Pancreas (tissue), 10 donors: ENCODE measurements at regions of chr22 and their contacts with region 1.

Region 1: DNA sequence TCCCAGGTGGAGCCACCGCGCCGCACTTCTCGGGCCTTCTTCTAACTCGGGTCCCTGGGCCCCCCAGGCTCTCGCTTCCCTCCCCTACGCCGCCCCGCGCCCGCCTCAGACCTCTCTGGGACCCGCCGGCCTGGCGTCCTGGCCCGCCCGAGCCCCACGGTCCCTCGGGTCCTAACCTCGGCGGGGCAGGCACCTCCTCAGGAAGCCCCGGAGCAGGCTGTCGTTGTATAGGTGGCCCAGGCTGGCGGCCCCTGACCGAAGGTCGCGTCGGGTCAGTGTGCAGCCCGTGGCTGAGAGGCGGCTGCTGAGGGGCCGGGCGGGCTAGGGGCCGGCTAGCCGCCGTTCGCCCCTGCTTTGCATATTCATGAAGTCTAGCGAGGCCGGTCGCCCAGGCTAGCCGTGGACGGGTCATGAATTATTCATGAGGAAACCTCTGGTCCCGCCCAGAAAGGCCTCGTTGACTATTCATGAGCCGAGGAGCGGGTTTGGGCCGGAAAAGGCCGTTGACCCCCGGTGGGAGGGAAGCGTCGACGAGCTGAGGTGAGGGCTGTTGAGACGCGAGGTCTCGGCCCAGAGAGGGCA is at the start of gene HORMAD2:
- DNase-seq: peak in 1 of 6 donors; percentile 62
- ATAC-seq: no peak
- H3K4me3 ChIP-seq: peak within 1 kb of the TSS in 1 of 4 donors; percentile 10
- H3K27ac ChIP-seq: no peak within 1 kb of the TSS
- H3K4me1 ChIP-seq: no peaks in the 10 kb centered on the region
- H3K27me3 ChIP-seq: no peaks in the 10 kb centered on the region
- CTCF ChIP-seq: no peak
- total RNA-seq, gene HORMAD2: not detected

Region 2: DNA sequence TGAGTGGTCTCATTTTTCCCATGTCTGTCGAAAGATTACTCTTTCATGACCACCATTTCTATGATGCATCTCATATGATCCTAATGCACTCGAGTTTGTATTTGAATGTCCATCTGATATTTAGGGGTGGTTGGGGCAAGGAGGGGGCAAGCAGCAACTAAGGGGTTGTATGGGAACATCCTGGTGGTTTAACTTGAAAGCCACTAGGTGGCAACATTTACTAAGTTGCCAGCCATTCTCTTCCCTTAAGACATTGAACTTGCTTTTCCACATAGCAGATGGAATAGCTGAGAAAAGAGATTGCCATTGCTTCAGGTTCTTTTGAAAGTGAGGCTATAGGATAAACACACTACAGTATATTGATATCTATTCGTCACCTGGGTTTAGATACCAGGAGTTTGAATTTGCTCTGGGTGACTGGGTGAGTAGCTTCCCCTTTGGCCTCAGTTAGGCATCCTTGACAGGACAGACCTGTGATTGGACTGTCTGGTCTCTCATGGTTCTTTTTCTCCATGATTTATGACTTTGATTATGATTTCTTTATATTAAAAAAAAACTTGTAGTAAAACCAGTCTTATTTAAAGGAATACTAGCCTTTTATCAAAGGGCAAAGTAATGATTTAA is 444.2 kb before region 1 on chr22:
- intact Hi-C with region 1: loop called in 1 of 3 experiments (anchors 10 kb)
- DNase-seq: no peak
- ATAC-seq: peak; percentile 56 to 84 (median 80)
- H3K4me3 ChIP-seq: no peak overlapping the region
- H3K27ac ChIP-seq: no peak overlapping the region
- H3K4me1 ChIP-seq: peaks cover 0 to 1% (median 0%) of the 10 kb centered on the region in 3 donors
- H3K27me3 ChIP-seq: no peaks in the 10 kb centered on the region
- CTCF ChIP-seq: peak in 3 of 4 donors; percentile 18 to 39 (median 36)

Region 3: DNA sequence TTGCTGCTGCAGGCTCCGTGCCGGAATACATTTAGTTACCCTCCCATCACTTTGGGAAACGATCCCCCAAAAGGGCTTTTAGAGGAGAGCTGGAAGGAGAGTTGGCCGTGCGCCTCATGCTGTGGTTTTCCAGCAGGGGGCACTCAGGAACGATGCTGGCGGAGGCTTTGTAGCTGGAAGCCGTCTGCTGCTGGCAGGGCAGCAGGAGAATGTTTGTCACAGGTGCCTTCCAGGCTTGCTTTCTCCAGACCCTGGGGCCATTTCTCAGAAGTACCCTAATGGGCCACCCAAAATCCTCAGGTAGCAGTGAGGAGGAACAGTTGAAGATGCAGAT is 390.2 kb before region 1 on chr22:
- intact Hi-C with region 1: loop called in 1 of 3 experiments (anchors 10 kb)
- DNase-seq: peak; percentile 51 to 83 (median 74)
- ATAC-seq: peak; percentile 76 to 93 (median 88)
- H3K4me3 ChIP-seq: no peak overlapping the region
- H3K27ac ChIP-seq: no peak overlapping the region
- H3K4me1 ChIP-seq: no peaks in the 10 kb centered on the region
- H3K27me3 ChIP-seq: no peaks in the 10 kb centered on the region
- CTCF ChIP-seq: peak; percentile 33 to 63 (median 56)

Region 4: DNA sequence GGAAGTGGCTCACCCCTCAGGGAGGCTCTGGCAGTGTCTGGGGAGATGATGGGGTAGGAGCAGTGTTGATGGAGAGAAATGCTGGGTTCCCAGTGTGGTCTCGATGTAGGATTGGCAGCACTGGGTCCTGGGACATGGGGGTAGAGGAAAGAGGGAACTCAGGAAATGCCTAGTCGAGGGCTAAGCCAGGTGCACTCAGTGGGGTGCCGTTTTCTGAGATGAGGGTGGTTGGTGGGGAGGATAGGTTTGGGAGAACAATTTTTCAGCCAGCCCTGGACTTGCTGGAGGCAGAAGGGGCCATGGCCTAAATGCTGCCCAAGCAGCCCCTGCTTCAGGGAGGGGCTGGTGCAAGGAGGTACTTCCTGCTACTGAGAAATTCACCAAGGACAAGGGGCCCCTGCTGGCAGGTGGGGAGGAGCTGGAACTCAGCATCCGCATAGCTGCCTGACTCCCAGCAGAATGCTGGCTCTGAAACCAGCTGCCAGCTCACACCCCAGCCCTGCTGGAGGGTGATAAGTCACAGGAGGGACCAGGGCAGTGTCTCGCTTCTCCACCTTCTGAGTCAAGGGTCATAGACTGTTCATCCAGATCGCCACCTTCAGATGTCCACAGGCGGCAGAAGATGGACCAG is 282.7 kb after region 1 on chr22:
- intact Hi-C with region 1: no loop called
- DNase-seq: no peak
- ATAC-seq: no peak
- H3K4me3 ChIP-seq: no peak overlapping the region
- H3K27ac ChIP-seq: no peak overlapping the region
- H3K4me1 ChIP-seq: no peaks in the 10 kb centered on the region
- H3K27me3 ChIP-seq: no peaks in the 10 kb centered on the region
- CTCF ChIP-seq: no peak